Mammary epithelial cell (primary cell): ENCODE measurements at regions of chr1 and their contacts with region 1.

Region 1: GRCh38 chr1:33327587-33328315 is 6.9 kb upstream of the A3GALT2 start:
- DNase-seq: peak; percentile 99
- H3K4me3 ChIP-seq: no peak overlapping the region
- H3K27ac ChIP-seq: peak overlapping the region; percentile 48
- H3K4me1 ChIP-seq: peaks cover 56% of the 10 kb centered on the region
- H3K27me3 ChIP-seq: no peaks in the 10 kb centered on the region
- CTCF ChIP-seq: peak in 1 of 2 donors; percentile 21

Region 2: DNA sequence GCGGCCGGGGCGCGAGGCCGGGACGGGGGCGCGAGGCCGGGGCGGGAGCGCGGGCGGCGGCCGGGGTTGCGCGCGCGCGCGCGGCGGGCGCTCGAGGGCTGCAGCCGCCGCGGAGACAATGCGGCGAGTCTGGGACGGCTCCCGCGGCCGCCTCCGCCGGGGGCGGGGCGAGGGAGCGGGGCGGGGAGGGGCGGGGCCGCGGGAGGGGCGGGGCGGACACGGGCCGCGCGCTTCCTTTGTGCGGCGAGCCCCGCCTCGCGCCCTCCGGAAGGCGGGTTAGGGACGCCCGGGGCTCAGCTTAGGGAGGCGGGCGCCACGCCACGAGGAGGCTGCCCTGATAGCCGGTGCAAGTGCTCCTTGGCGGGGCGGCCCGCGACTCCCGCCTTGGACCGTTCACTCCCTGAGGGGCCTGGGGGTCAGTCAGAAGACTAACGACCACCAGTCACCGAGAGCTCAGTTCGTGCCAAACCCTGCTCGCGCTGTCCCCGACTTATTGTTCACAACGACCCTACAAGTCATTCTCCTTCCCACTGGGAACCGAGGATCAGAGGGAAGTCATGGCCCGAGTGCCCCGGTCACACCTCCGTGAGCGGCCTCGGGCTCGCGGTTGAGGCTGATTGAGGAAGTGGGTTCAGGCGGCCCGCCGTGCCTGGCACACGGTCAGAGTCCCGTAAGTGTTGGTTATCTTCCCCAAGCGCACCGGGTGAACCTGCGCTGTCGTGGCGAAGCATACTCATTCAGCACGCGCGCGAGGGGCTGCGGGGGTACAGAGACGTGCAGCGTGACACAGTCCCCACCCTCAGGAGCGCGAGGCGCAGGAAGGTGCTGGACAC is 22.2 kb after region 1 on chr1:
- CTCF ChIA-PET with region 1: interaction called, 4 read pairs
- dilution Hi-C with region 1: no loop called
- in situ Hi-C with region 1: no loop called
- intact Hi-C with region 1: loop called (anchors 1 kb)
- DNase-seq: peak; percentile 72
- H3K4me3 ChIP-seq: peak overlapping the region; percentile 45 to 82 (median 73)
- H3K27ac ChIP-seq: peak overlapping the region; percentile 41
- H3K4me1 ChIP-seq: peaks cover 38% of the 10 kb centered on the region
- H3K27me3 ChIP-seq: no peaks in the 10 kb centered on the region
- CTCF ChIP-seq: no peak